ENCODE measurements at regions of chr17 and their contacts with region 1.

Region 1: GRCh38 chr17:60354223-60354622 is 37.7 kb downstream of the USP32 start:
- DNase-seq: no peak
- ATAC-seq: no peak
- H3K4me3 ChIP-seq: no peak overlapping the region
- H3K27ac ChIP-seq: no peak overlapping the region
- H3K4me1 ChIP-seq: peaks cover 12% of the 10 kb centered on the region; the same call in 1 of the 2 replicates
- H3K27me3 ChIP-seq: no peaks in the 10 kb centered on the region
- CTCF ChIP-seq: no peak

Region 2: DNA sequence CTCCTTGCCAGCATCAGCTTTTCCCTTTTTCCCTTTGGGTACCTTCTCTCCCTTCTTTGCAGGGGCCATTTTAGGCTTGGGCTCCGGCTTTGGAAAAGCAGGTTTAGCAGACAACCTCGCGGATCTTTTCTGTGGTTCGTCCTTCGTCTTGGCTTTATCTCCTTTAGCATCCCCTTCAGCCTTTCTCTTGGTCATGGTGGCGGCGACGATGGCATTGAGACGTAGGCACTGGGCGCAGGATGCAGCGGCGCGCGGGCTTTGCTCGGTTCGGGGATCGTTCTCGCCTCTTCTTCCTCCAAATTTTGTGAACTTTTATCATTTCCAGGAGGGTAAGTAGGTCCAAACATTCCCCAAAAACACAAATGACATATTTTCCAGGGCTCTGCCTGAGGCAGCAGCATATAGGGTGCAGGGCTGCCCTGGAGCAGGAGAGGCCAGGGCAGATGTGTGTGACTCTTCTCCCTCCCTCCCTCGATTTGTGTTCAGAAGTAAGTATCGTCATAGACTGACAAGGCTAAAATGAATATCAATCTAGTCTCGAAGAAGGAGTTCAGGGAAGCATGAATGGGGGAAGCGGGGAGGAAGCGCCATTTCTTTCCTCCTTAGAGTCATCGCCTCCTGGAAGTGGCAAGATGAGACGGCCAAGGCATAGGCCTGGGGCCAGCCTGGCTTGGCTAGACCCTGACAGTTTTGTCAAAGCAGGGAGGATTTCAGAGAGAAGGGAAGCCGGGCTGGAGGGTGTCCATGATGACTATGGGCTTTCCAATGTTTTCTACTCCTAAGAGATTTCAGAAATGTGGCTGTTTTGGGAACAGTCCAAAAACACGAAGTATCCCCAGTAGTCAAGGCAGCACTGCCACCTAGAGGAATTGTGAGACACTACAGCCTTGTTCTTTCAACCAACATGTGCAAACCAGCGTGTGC is 81.3 kb after region 1 on chr17:
- CTCF ChIA-PET with region 1: no interaction called
- POLR2A ChIA-PET with region 1: no interaction called
- in situ Hi-C with region 1: no loop called
- intact Hi-C with region 1: no loop called
- DNase-seq: peak; percentile 52
- ATAC-seq: peak; percentile 81; the same call in 1 of the 2 replicates
- H3K4me3 ChIP-seq: no peak overlapping the region
- H3K27ac ChIP-seq: no peak overlapping the region
- H3K4me1 ChIP-seq: no peaks in the 10 kb centered on the region
- H3K27me3 ChIP-seq: no peaks in the 10 kb centered on the region
- CTCF ChIP-seq: peak; percentile 85

Region 3: GRCh38 chr17:60637683-60638082 is 283.5 kb after region 1 on chr17:
- CTCF ChIA-PET with region 1: no interaction called
- POLR2A ChIA-PET with region 1: interaction called, 10 read pairs
- in situ Hi-C with region 1: no loop called
- intact Hi-C with region 1: no loop called
- DNase-seq: no peak
- ATAC-seq: no peak
- H3K4me3 ChIP-seq: no peak overlapping the region
- H3K27ac ChIP-seq: no peak overlapping the region
- H3K4me1 ChIP-seq: no peaks in the 10 kb centered on the region
- H3K27me3 ChIP-seq: no peaks in the 10 kb centered on the region
- CTCF ChIP-seq: no peak

Measured in Panc1 (cell line).